Activated CD4-positive, alpha-beta memory T cell treated with anti-CD3 and anti-CD28 coated beads for 36 hours (primary cell): ENCODE measurements at regions of chr1 and their contacts with region 1.

Region 1: DNA sequence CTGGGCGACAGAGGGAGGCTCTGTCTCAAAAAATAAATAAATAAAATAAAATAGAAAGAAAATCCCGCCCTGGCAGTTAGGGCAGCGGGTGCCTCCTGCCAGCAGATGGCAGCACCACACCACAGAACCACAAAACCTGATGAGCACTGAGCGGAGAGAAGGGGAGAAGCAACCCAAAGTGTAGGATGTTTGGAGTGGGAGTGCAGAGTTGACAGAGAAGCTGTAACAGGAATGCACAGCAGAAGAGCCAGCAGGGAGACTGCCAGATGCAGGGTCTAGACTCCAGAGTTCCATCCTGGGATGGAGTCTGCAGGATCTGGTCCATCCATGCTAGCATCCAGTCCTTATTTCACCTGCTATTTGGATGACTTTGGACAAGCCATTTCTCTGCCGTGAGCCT is 29.7 kb upstream of the KIRREL1 start:
- DNase-seq: peak; percentile 69
- H3K4me3 Mint-ChIP-seq: no peak overlapping the region
- H3K27ac Mint-ChIP-seq: no peak overlapping the region
- H3K4me1 Mint-ChIP-seq: peaks cover 5% of the 10 kb centered on the region
- H3K27me3 Mint-ChIP-seq: peaks cover 11% of the 10 kb centered on the region

Region 2: DNA sequence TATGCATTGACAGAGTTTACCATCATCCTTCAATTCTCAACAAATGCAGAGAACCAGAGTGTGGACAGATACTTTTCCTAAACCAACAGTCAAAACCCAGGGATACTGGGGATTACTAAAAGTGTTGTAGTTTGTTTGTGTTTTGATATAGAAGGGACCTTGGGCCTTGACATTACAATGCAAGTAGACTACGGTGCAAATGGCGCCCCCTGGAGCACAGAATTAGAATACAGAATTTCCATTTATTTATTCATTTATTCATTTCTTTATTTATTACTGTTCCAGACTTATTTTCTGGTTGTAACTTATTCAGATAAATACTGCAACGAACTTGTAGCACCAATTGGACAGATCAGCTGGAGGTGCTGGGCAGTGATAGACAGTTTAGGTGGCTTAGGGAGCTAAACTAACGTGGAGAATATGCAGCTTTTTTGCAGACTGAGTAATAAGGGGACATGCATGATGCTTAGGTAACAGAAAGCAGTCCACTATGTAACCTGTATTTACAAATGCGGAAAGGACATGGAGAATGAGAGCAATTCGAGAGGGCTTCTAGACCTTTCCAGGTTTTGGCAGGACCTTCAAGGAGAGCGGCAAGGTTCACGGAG is 72.4 kb after region 1 on chr1:
- CTCF ChIA-PET with region 1: interaction called, 4 read pairs
- POLR2A ChIA-PET with region 1: no interaction called
- intact Hi-C with region 1: loop called (anchors 10 kb)
- DNase-seq: no peak
- H3K4me3 Mint-ChIP-seq: no peak overlapping the region
- H3K27ac Mint-ChIP-seq: no peak overlapping the region
- H3K4me1 Mint-ChIP-seq: no peaks in the 10 kb centered on the region
- H3K27me3 Mint-ChIP-seq: peaks cover 10% of the 10 kb centered on the region

Region 3: DNA sequence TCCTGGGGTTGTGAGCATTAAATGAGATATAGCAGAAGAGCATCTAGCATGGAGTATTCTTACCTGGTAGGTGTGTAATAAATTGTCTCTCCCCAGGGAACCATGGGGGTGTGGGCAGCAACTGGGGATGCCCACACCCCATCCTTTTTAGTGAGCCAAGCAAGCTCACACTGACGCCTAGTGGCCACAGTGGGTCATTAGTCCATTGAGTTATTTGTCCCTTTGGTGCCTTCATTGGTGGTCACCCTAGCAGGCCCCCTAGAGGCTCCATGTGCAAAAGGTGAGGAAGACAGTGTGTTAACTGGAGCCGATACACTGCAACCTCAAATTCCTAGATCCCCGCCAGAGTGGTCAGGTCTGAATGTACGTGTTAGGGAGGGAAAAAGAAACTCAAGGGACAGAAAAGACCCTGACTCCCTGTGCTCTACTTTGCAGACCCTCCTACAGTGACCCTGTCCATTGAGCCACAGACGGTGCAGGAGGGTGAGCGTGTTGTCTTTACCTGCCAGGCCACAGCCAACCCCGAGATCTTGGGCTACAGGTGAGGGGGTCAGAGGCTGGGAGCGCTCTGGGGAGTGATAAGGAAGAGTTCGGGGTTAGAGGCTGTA is 123.7 kb after region 1 on chr1:
- CTCF ChIA-PET with region 1: no interaction called
- POLR2A ChIA-PET with region 1: no interaction called
- intact Hi-C with region 1: loop called (anchors 5 kb)
- DNase-seq: peak; percentile 41
- H3K4me3 Mint-ChIP-seq: no peak overlapping the region
- H3K27ac Mint-ChIP-seq: no peak overlapping the region
- H3K4me1 Mint-ChIP-seq: no peaks in the 10 kb centered on the region
- H3K27me3 Mint-ChIP-seq: no peaks in the 10 kb centered on the region